Activated CD4-positive, alpha-beta T cell treated with anti-CD3 and anti-CD28 coated beads, Interleukin-2, amount 10 ng/mL, durations not matched to agents 24 days and 14 days (primary cell): ENCODE measurements at regions of chr2 and their contacts with region 1.

Region 1: DNA sequence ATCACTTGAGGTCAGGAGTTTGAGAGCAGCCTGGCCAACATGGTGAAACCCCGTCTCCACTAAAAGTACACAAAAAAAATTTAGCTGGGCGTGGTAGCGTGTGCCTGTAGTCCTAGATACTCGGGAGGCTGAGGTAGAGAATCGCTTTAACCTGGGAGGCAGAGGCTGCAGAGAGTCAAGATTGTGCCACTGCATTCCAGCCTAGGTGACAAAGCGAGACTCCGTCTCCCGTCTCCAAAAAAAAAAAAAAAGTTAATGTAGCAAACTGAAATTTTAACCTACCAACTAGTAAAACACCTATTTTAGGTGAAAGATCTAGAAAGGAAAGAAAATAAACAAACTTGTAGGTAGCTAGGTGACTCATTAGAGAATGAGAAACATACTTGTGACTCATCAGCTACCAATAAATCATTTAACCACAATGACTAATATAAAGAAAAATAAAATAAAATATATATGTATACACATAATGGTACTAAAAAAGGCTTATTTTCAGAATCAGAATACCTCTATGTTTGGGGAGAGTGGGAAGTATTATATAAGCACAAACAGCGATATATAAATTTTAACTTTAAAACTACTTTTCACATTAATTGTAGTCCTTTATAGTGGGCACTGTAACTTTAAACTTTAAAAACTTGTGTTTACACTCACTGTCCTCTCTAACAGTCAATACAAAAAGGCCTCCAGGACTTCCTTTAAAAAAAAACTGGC is 36.6 kb downstream of the DARS1 start:
- DNase-seq: peak; percentile 71
- H3K4me3 Mint-ChIP-seq: peak overlapping the region; percentile 60
- H3K27ac Mint-ChIP-seq: peak overlapping the region; percentile 94
- H3K4me1 Mint-ChIP-seq: peaks cover 51% of the 10 kb centered on the region
- H3K27me3 Mint-ChIP-seq: no peaks in the 10 kb centered on the region

Region 2: GRCh38 chr2:135960656-135961551 is 12.1 kb after region 1 on chr2:
- intact Hi-C with region 1: loop called (anchors 1 kb)
- DNase-seq: peak; percentile 83
- H3K4me3 Mint-ChIP-seq: peak overlapping the region; percentile 58
- H3K27ac Mint-ChIP-seq: peak overlapping the region; percentile 94
- H3K4me1 Mint-ChIP-seq: peaks cover 56% of the 10 kb centered on the region
- H3K27me3 Mint-ChIP-seq: no peaks in the 10 kb centered on the region